Thyroid gland (tissue), 4 donors: ENCODE measurements at regions of chr1 and their contacts with region 1.

Region 1: DNA sequence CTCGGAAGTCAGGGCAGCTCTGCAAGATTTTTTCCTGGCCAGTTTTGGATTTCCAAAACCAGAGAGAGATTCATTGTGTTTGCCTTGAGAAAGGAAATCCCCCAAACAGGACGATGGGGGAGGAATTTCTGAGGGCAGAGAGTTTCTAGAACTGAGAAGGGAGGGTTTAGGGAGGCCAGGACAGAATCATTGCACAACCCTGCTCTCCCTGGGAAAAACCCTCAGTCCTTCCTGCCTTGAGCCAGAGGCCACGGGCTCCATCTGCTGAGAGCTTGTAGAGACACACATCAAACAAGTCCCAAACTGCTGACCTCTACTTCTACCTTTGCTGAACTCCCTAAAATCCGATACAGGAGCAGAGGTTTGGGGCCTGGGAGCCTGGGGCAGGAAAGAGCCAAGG is 99.7 kb downstream of the NMNAT2 start:
- DNase-seq: peak; percentile 71 to 85
- H3K4me3 ChIP-seq: no peak overlapping the region
- H3K27ac ChIP-seq: peak overlapping the region in 2 of 3 donors; percentile 74 to 82
- H3K4me1 ChIP-seq: peaks cover 9 to 18% of the 10 kb centered on the region in 2 donors
- H3K27me3 ChIP-seq: no peaks in the 10 kb centered on the region
- CTCF ChIP-seq: peak in 4 of 6 experiments; percentile 57 to 76 (median 66)
- POLR2A ChIP-seq: no peak

Region 2: DNA sequence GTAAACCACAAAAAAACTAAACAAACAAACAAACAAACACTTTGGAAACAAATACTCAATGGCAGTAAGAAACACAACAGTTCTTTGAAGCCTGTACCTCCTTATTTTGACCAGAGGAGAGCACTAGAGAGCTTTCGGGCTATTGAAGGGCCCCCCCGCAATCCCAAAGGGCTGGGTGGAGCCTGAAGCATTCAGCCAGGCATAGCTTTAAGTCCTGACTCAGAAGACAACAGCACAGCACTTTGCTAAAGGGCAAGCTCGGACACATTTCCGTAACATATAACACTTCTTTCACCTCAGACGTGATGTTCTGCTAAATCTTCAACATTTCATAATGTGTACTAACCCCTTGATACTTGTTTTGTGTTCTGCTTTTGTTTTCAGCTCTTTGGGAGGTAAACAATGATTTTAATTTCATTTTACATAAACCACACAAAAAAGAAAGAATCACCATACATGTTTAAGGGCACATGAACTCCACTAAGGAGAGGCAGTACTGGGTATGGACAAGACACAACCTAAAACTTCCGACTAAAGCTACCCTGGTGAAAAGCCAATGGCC is 355.8 kb before region 1 on chr1:
- intact Hi-C with region 1: loop called (anchors 5 kb)
- DNase-seq: peak; percentile 84
- H3K4me3 ChIP-seq: no peak overlapping the region
- H3K27ac ChIP-seq: peak overlapping the region; percentile 16 to 73 (median 48)
- H3K4me1 ChIP-seq: peaks cover 3 to 4% of the 10 kb centered on the region in 2 donors
- H3K27me3 ChIP-seq: no peaks in the 10 kb centered on the region
- CTCF ChIP-seq: peak; percentile 77 to 99 (median 95)
- POLR2A ChIP-seq: peak in 1 of 2 donors; percentile 78

Region 3: DNA sequence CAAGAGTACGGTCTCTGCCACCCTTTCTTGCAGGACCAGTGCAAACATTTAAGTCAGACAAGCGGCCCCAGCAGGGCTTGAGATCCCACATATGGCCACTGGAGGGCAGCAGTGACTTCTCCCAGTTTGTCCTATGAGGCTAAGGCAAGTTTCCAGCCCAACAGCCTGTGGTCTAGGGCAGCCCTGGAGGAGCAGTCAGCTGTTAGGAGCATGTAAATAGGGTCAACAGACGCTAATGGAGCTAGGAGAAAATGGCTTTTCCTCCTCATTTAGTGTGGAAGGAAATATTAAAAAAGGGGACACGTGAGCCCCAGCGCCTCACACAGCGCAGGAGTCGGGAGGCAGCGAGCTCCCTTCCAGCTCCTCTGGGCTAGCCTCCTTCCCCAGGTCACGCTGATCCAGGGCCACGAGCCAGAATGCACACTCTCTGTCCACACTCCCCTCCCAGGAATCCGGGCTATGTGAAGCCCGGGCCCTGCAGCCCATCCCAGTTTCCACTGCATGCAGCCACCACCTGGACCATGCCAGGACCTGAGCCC is 36.8 kb before region 1 on chr1:
- intact Hi-C with region 1: loop called (anchors 2 kb)
- DNase-seq: peak; percentile 93 to 95
- H3K4me3 ChIP-seq: no peak overlapping the region
- H3K27ac ChIP-seq: peak overlapping the region; percentile 32 to 92 (median 81)
- H3K4me1 ChIP-seq: peaks cover 45 to 58% of the 10 kb centered on the region in 2 donors
- H3K27me3 ChIP-seq: no peaks in the 10 kb centered on the region
- CTCF ChIP-seq: peak; percentile 87 to 97 (median 94)
- POLR2A ChIP-seq: peak in 1 of 2 donors; percentile 28